ENCODE measurements at regions of chr15 and their contacts with region 1.

Region 1: GRCh38 chr15:67134067-67134838 is 68.9 kb downstream of the SMAD3 start:
- DNase-seq: peak; percentile 29 to 82 (median 78)
- ATAC-seq: peak; percentile 97
- H3K4me3 ChIP-seq: peak overlapping the region; percentile 41
- H3K4me3 Mint-ChIP-seq: peak overlapping the region; percentile 77 to 95 (median 85)
- H3K27ac ChIP-seq: peak overlapping the region; percentile 91
- H3K27ac Mint-ChIP-seq: peak overlapping the region; percentile 96 to 100 (median 98)
- H3K4me1 ChIP-seq: peaks cover 46 to 72% of the 10 kb centered on the region in 2 donors
- H3K4me1 Mint-ChIP-seq: peaks cover 41 to 93% (median 88%) of the 10 kb centered on the region in 7 donors
- H3K27me3 ChIP-seq: no peaks in the 10 kb centered on the region
- H3K27me3 Mint-ChIP-seq: no peaks in the 10 kb centered on the region

Region 2: DNA sequence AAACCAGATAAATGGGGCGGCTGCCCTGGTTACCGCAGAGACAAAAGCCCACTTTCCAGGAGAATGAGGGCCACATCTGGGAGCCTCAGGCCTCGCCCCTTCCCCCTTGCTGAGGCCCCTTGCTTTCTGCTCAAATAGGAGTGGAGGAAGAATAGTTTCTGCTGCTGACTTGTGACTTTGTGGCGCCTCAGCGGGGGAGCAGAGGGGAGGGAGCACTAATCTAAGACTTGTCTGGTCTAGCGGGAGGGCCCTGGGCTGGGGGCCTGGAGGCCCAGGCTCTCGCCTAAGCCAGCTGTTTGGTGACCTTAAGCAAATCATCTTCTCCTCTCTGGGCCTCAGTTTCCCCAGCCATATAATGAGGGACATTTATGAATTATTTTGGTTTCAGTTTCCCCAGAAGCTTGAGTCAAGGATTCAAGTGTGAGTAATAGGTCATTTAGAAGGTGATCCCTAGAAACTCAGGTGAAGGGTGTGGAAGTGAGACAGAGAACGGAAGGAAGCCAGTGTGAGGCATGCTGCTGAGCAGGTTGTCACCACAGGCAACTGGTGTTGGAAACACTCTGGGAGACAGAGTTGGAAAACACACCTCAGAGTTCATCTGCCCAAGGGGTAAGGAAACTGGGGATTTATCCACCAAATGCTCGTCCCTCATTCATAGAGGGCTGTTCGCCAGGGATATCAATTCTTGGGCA is 94.7 kb before region 1 on chr15:
- CTCF ChIA-PET with region 1: no interaction called
- POLR2A ChIA-PET with region 1: no interaction called
- intact Hi-C with region 1: loop called in 1 of 2 experiments (anchors 5 kb)
- DNase-seq: no peak
- ATAC-seq: no peak
- H3K4me3 ChIP-seq: no peak overlapping the region
- H3K4me3 Mint-ChIP-seq: peak overlapping the region in 9 of 10 donors; percentile 10 to 72 (median 57)
- H3K27ac ChIP-seq: no peak overlapping the region
- H3K27ac Mint-ChIP-seq: peak overlapping the region in 8 of 9 donors; percentile 1 to 80 (median 20)
- H3K4me1 ChIP-seq: peaks cover 4 to 27% of the 10 kb centered on the region in 2 donors
- H3K4me1 Mint-ChIP-seq: peaks cover 21 to 40% (median 25%) of the 10 kb centered on the region in 7 donors
- H3K27me3 ChIP-seq: no peaks in the 10 kb centered on the region
- H3K27me3 Mint-ChIP-seq: peaks cover 0 to 6% (median 0%) of the 10 kb centered on the region in 5 donors

Region 3: GRCh38 chr15:67109141-67110034 is 24.9 kb before region 1 on chr15:
- CTCF ChIA-PET with region 1: no interaction called
- POLR2A ChIA-PET with region 1: no interaction called
- intact Hi-C with region 1: no loop called
- DNase-seq: no peak
- ATAC-seq: peak; percentile 81
- H3K4me3 ChIP-seq: no peak overlapping the region
- H3K4me3 Mint-ChIP-seq: peak overlapping the region in 2 of 10 donors; percentile 52 to 58
- H3K27ac ChIP-seq: no peak overlapping the region
- H3K27ac Mint-ChIP-seq: peak overlapping the region in 3 of 9 donors; percentile 29 to 79 (median 59)
- H3K4me1 ChIP-seq: peaks cover 72 to 74% of the 10 kb centered on the region in 2 donors
- H3K4me1 Mint-ChIP-seq: peaks cover 22 to 66% (median 51%) of the 10 kb centered on the region in 7 donors
- H3K27me3 ChIP-seq: no peaks in the 10 kb centered on the region
- H3K27me3 Mint-ChIP-seq: no peaks in the 10 kb centered on the region

Region 4: GRCh38 chr15:67120839-67121643 is 13.2 kb before region 1 on chr15:
- CTCF ChIA-PET with region 1: interaction called, 3 read pairs
- POLR2A ChIA-PET with region 1: interaction called, 9 read pairs
- intact Hi-C with region 1: loop called (anchors 1 kb)
- DNase-seq: peak; percentile 54 to 90 (median 71)
- ATAC-seq: peak; percentile 93
- H3K4me3 ChIP-seq: peak overlapping the region; percentile 48
- H3K4me3 Mint-ChIP-seq: peak overlapping the region; percentile 78 to 90 (median 84)
- H3K27ac ChIP-seq: peak overlapping the region; percentile 78
- H3K27ac Mint-ChIP-seq: peak overlapping the region; percentile 88 to 97 (median 95)
- H3K4me1 ChIP-seq: peaks cover 58 to 66% of the 10 kb centered on the region in 2 donors
- H3K4me1 Mint-ChIP-seq: peaks cover 53 to 95% (median 82%) of the 10 kb centered on the region in 7 donors
- H3K27me3 ChIP-seq: no peaks in the 10 kb centered on the region
- H3K27me3 Mint-ChIP-seq: no peaks in the 10 kb centered on the region

Region 5: GRCh38 chr15:67150028-67150860 is 16.0 kb after region 1 on chr15:
- CTCF ChIA-PET with region 1: no interaction called
- POLR2A ChIA-PET with region 1: interaction called, 5 read pairs
- intact Hi-C with region 1: loop called (anchors 1 kb)
- DNase-seq: peak in 1 of 9 donors; percentile 61
- ATAC-seq: peak; percentile 61
- H3K4me3 ChIP-seq: peak overlapping the region; percentile 0
- H3K4me3 Mint-ChIP-seq: peak overlapping the region; percentile 4 to 74 (median 49)
- H3K27ac ChIP-seq: no peak overlapping the region
- H3K27ac Mint-ChIP-seq: peak overlapping the region in 6 of 9 donors; percentile 7 to 57 (median 30)
- H3K4me1 ChIP-seq: peaks cover 35 to 48% of the 10 kb centered on the region in 2 donors
- H3K4me1 Mint-ChIP-seq: peaks cover 48 to 78% (median 65%) of the 10 kb centered on the region in 7 donors
- H3K27me3 ChIP-seq: no peaks in the 10 kb centered on the region
- H3K27me3 Mint-ChIP-seq: no peaks in the 10 kb centered on the region

Measured in naive thymus-derived CD4-positive, alpha-beta T cell (primary cell).